ENCODE measurements at regions of chr5 and their contacts with region 1.

Region 1: DNA sequence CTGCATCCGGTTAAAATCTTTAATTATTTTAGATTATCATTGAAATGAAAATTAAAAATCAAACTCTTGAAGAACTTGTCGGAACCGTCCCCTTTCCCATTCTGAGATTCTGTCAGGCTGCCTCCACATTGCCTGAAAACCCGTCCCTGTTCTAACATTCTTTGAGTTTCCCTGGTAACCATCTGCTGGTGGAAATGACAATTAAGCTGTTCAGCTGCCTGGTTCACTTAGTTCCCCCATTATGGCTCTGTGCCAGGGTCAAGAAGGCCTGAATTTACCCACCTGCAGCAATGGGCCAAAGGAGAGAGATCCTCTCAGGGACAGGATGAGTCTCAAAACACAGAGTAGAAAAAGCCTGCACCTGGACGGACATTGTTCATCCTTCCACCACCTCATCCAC is 11.8 kb upstream of the TCOF1 start:
- DNase-seq: no peak
- ATAC-seq: no peak
- H3K4me3 ChIP-seq: no peak overlapping the region
- H3K27ac ChIP-seq: no peak overlapping the region
- H3K4me1 ChIP-seq: no peaks in the 10 kb centered on the region; a peak in 1 of 5 replicates
- H3K27me3 ChIP-seq: peaks cover 13 to 28% of the 10 kb centered on the region in 2 experiments; a peak in 4 of 5 replicates
- CTCF ChIP-seq: no peak
- EP300 ChIP-seq: no peak
- POLR2A ChIP-seq: no peak
- RAD21 ChIP-seq: no peak

Region 2: DNA sequence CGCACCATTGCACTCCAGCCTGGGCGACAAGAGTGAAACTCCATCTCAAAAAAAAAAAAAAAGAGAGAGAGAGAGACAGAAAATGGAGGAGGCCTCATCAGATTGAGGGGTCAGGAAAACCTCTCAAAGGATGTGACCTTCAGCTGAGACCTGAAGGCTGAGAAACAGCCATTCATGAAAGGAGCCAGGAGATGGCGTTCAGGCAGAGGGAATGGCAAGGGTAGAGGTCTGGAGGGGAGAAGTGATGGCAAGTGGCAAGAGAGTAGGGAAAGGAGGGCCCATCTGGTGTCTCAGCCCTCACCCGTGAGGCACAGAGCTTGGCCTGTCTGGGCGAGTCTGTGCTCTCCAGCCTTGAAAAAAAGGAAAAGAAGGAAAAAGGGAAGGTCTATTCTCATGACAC is 73.2 kb before region 1 on chr5:
- CTCF ChIA-PET with region 1: interaction called, 5 read pairs
- POLR2A ChIA-PET with region 1: no interaction called
- in situ Hi-C with region 1: loop called (anchors 5 kb)
- intact Hi-C with region 1: loop called (anchors 1 kb)
- DNase-seq: peak in 3 of 4 experiments; percentile 35 to 63 (median 62)
- ATAC-seq: peak; percentile 89
- H3K4me3 ChIP-seq: no peak overlapping the region
- H3K27ac ChIP-seq: no peak overlapping the region
- H3K4me1 ChIP-seq: no peaks in the 10 kb centered on the region
- H3K27me3 ChIP-seq: peaks cover 22 to 57% of the 10 kb centered on the region in 2 experiments; a peak in 4 of 5 replicates
- CTCF ChIP-seq: peak; percentile 65 to 82 (median 75)
- EP300 ChIP-seq: no peak
- POLR2A ChIP-seq: no peak
- RAD21 ChIP-seq: peak; percentile 90 to 94

Region 3: DNA sequence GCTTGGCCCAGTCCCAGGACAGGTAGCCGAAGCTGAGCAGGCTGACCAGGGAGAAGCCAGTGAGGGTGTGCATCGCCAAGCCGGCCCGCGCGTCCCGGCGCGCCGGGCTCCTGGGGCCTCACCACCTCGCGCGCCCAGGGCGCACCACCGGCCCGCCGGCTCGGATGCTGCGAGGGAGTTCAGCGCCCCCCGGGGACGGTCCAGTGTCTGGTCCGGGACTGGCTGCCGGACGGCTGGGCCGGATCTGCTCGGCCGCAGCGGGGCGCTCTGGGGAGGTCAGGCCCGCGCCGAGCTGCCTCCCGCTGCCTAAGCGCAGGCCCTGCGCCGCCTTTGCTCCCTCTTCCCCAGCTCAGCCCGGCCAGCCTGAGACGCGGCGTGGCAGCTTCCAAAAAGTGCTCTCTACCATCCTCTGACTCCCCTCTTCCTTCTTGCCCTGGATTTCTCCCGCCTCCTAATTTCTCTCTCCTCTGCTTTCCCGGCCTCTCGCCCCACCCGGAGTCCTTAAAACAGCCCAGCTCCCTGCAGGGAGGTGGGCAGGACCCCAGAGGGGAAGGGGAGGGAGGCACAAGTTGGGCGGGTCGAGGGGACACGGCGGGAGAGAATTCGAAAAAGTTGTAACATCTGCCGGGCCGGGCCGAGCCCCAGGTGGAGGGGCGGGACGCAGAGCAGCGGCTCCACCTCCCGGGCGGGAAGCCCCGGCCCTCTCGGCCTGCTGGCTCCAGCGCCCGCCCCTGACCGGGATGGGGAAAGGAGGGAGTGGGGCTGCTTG is 43.2 kb before region 1 on chr5 and contains the start of gene ARSI:
- CTCF ChIA-PET with region 1: no interaction called
- POLR2A ChIA-PET with region 1: no interaction called
- in situ Hi-C with region 1: no loop called
- intact Hi-C with region 1: no loop called
- DNase-seq: peak in 3 of 4 experiments; percentile 32 to 65 (median 61)
- ATAC-seq: peak; percentile 73
- H3K4me3 ChIP-seq: no peak within 1 kb of the TSS
- H3K27ac ChIP-seq: no peak within 1 kb of the TSS
- H3K4me1 ChIP-seq: peaks cover 0 to 13% of the 10 kb centered on the region in 2 experiments; a peak in 1 of 5 replicates
- H3K27me3 ChIP-seq: peaks cover 19 to 58% of the 10 kb centered on the region in 2 experiments
- CTCF ChIP-seq: peak in 2 of 3 experiments; percentile 36 to 74; a peak in 4 of 6 replicates
- EP300 ChIP-seq: no peak
- POLR2A ChIP-seq: no peak
- RAD21 ChIP-seq: 0 out of 4 replicates have a peak, but pooled peaks of 1 of the 2 experiments have one; percentile 11
- polyA plus RNA-seq, gene ARSI: not detected

Region 4: GRCh38 chr5:150389531-150390266 is 44.0 kb after region 1 on chr5:
- CTCF ChIA-PET with region 1: no interaction called
- POLR2A ChIA-PET with region 1: no interaction called
- in situ Hi-C with region 1: no loop called
- intact Hi-C with region 1: no loop called
- DNase-seq: peak in 2 of 4 experiments; percentile 48 to 50
- ATAC-seq: peak; percentile 50; the same call in 2 of the 3 replicates
- H3K4me3 ChIP-seq: no peak overlapping the region
- H3K27ac ChIP-seq: no peak overlapping the region
- H3K4me1 ChIP-seq: 0 out of 5 replicates have a peak, but pooled peaks cover 0 to 3% of the 10 kb centered on the region in 2 experiments
- H3K27me3 ChIP-seq: no peaks in the 10 kb centered on the region
- CTCF ChIP-seq: no peak
- EP300 ChIP-seq: no peak
- POLR2A ChIP-seq: no peak
- RAD21 ChIP-seq: no peak